ENCODE measurements at regions of chr4 and their contacts with region 1.

Region 1: GRCh38 chr4:9762823-9763475 is 18.5 kb upstream of the DRD5 start:
- DNase-seq: peak in 3 of 5 donors; percentile 46 to 58 (median 56)
- ATAC-seq: peak in 2 of 4 donors; percentile 46 to 60
- H3K4me3 ChIP-seq: no peak overlapping the region
- H3K27ac ChIP-seq: no peak overlapping the region
- H3K4me1 ChIP-seq: no peaks in the 10 kb centered on the region
- H3K27me3 ChIP-seq: peaks cover 0 to 16% (median 0%) of the 10 kb centered on the region in 9 donors
- CTCF ChIP-seq: peak; percentile 50 to 78 (median 73)
- POLR2A ChIP-seq: no peak

Region 2: GRCh38 chr4:9709724-9710123 is 53.2 kb before region 1 on chr4:
- intact Hi-C with region 1: no loop called
- DNase-seq: no peak
- ATAC-seq: no peak
- H3K4me3 ChIP-seq: no peak overlapping the region
- H3K27ac ChIP-seq: no peak overlapping the region
- H3K4me1 ChIP-seq: no peaks in the 10 kb centered on the region
- H3K27me3 ChIP-seq: no peaks in the 10 kb centered on the region
- CTCF ChIP-seq: no peak
- POLR2A ChIP-seq: no peak

Region 3: DNA sequence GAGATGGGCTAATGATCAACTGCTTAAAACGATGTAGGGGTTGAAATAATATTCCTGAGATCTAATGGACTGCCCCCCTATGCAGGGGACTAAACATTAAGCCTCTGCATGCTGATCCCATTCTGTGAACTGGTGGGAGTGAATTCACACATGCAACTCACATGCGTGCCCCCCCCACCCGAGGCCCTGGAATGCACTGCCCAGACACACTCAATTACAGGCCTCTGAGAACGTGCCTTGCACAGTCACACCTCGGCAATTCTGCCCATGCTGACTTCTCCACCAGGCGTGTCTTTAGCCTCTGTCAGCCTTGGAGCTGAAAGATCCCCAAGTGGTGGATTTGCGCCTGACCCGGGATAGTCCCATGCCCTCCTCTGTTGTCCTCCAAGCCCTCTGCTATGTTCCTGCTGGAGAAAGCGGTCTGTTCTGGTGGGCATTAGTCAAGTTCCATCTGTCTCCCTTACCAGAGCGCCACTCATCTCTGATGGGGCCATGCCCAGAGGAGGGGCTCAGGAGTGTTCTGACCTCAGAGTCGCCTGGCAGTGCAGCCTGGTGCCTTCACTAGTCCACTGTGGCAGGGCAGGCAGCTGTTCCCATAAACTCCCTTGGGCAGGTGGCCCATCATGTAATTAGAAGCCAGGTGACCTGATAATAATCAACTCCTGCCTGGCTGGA is 104.9 kb after region 1 on chr4:
- intact Hi-C with region 1: no loop called
- DNase-seq: no peak
- ATAC-seq: peak in 1 of 4 donors; percentile 27
- H3K4me3 ChIP-seq: no peak overlapping the region
- H3K27ac ChIP-seq: no peak overlapping the region
- H3K4me1 ChIP-seq: no peaks in the 10 kb centered on the region
- H3K27me3 ChIP-seq: no peaks in the 10 kb centered on the region
- CTCF ChIP-seq: no peak
- POLR2A ChIP-seq: no peak

Region 4: DNA sequence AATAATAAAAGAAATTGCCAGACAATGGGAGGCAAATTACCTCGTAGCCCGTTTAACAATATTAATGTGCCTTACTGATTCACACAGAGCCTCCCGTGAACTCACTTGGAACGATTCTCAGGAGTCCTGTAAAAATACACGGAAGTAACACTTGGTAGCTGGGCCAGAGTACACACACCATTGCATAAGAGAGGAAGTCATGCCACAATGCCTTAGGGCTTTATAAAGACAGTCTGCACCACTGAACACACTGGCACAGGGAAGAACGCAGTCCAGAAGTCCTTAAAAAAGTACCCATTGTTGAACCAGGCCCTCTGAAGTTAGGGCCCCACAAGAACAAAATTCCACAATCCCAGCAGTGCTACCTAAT is 243.3 kb after region 1 on chr4:
- intact Hi-C with region 1: loop called in 1 of 10 experiments (anchors 2 kb)
- DNase-seq: peak in 1 of 5 donors; percentile 45
- ATAC-seq: peak; percentile 76 to 93 (median 88)
- H3K4me3 ChIP-seq: no peak overlapping the region
- H3K27ac ChIP-seq: peak overlapping the region in 10 of 12 donors; percentile 8 to 54 (median 31)
- H3K4me1 ChIP-seq: peaks cover 0 to 46% (median 25%) of the 10 kb centered on the region in 12 donors
- H3K27me3 ChIP-seq: no peaks in the 10 kb centered on the region
- CTCF ChIP-seq: no peak
- POLR2A ChIP-seq: no peak

Region 5: GRCh38 chr4:10018818-10019461 is 256.0 kb after region 1 on chr4:
- intact Hi-C with region 1: loop called in 9 of 10 experiments (anchors 1 to 2 kb)
- DNase-seq: peak; percentile 99
- ATAC-seq: peak; percentile 93 to 96 (median 96)
- H3K4me3 ChIP-seq: peak overlapping the region in 10 of 12 donors; percentile 38 to 61 (median 50)
- H3K27ac ChIP-seq: peak overlapping the region; percentile 84 to 95 (median 93)
- H3K4me1 ChIP-seq: peaks cover 5 to 57% (median 39%) of the 10 kb centered on the region in 12 donors
- H3K27me3 ChIP-seq: no peaks in the 10 kb centered on the region
- CTCF ChIP-seq: peak; percentile 96 to 100 (median 99)
- POLR2A ChIP-seq: peak; percentile 7 to 60

Region 6: GRCh38 chr4:10063544-10064300 is 300.8 kb after region 1 on chr4:
- intact Hi-C with region 1: loop called (anchors 1 to 5 kb)
- DNase-seq: peak; percentile 68 to 78 (median 69)
- ATAC-seq: peak; percentile 93 to 99 (median 98)
- H3K4me3 ChIP-seq: no peak overlapping the region
- H3K27ac ChIP-seq: peak overlapping the region in 6 of 12 donors; percentile 25 to 59 (median 48)
- H3K4me1 ChIP-seq: peaks cover 0 to 17% (median 9%) of the 10 kb centered on the region in 12 donors
- H3K27me3 ChIP-seq: no peaks in the 10 kb centered on the region
- CTCF ChIP-seq: peak; percentile 67 to 86 (median 78)
- POLR2A ChIP-seq: no peak

Region 7: GRCh38 chr4:10403633-10404445 is 640.9 kb after region 1 on chr4:
- intact Hi-C with region 1: loop called in 3 of 10 experiments (anchors 10 kb)
- DNase-seq: no peak
- ATAC-seq: peak; percentile 37 to 64 (median 46)
- H3K4me3 ChIP-seq: no peak overlapping the region
- H3K27ac ChIP-seq: no peak overlapping the region
- H3K4me1 ChIP-seq: peaks cover 0 to 4% (median 0%) of the 10 kb centered on the region in 12 donors
- H3K27me3 ChIP-seq: no peaks in the 10 kb centered on the region
- CTCF ChIP-seq: peak; percentile 24 to 65 (median 52)
- POLR2A ChIP-seq: no peak

Region 8: DNA sequence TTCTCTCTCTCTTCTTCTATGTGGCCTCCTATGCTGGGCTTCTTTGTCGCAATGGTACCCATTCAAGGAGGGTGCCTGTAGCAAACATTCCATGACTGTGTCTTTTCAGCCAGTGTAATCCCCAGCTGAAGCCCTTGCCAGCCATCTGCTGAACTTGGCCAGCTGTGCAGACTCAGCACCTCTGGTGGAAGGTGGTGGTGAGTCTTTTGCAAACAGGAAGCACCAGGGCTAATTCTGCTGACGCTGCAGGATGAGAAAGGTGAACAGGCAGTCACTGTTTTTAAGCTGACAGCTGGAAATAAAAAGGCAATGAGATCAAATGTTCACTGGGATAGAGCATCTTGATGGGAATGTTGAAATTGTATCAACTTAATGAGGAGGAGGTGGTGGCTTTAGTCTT is 1220.3 kb after region 1 on chr4:
- intact Hi-C with region 1: no loop called
- DNase-seq: no peak
- ATAC-seq: no peak
- H3K4me3 ChIP-seq: no peak overlapping the region
- H3K27ac ChIP-seq: no peak overlapping the region
- H3K4me1 ChIP-seq: no peaks in the 10 kb centered on the region
- H3K27me3 ChIP-seq: no peaks in the 10 kb centered on the region
- CTCF ChIP-seq: no peak
- POLR2A ChIP-seq: no peak

Measured in heart left ventricle (tissue), 16 donors.